AG04449 (cell line): ENCODE measurements at regions of chr19 and their contacts with region 1.

Region 1: GRCh38 chr19:45886427-45887199 is 672 bp upstream of the IRF2BP1 start:
- DNase-seq: peak; percentile 65
- H3K4me3 ChIP-seq: peak overlapping the region; percentile 78
- CTCF ChIP-seq: no peak

Region 2: GRCh38 chr19:45632468-45633196 is 254.0 kb before region 1 on chr19:
- CTCF ChIA-PET with region 1: no interaction called
- POLR2A ChIA-PET with region 1: no interaction called
- DNase-seq: peak; percentile 59
- H3K4me3 ChIP-seq: no peak overlapping the region
- CTCF ChIP-seq: no peak

Region 3: DNA sequence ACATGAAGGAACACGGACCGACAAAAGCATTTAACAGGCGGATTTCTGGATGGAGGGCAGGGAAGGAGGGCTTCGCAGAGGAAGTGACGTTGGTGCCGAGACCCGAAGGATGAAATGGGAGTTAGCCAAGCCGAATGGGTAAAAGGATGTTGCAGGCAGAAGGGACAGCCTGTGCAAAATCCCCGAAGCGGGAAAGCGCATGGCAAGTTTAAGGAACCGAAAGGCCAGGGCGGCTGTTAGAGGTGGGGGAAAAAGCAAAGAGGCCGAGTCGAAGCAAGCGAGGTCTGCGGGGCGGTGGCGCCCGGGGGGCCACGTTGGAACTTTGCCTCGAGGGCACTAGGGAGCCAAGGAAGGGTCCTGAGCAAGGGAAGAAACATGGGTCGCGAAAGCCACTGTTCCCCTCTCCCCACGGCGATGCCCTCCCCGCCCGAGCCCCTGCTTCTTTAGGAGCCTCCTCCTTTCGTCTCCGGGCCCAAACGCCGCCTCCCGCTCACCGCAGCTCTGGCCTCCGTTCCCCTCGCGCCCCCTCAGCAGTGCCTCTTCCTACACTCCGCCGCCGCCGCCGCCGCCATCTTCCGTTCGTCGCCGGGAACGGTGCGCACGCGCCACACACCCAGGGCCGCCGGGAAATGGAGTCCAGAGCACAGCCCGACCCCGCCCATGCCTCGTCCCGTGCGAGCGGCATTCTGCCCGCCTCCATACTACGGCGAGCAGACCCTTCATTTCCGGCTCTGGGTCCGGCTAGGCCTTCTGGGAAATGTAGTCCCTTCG is 23.9 kb before region 1 on chr19 and contains the start of gene SYMPK:
- CTCF ChIA-PET with region 1: interaction called, 67 read pairs
- POLR2A ChIA-PET with region 1: interaction called, 8 read pairs
- DNase-seq: peak; percentile 76
- H3K4me3 ChIP-seq: peak within 1 kb of the TSS; percentile 99
- CTCF ChIP-seq: no peak

Region 4: DNA sequence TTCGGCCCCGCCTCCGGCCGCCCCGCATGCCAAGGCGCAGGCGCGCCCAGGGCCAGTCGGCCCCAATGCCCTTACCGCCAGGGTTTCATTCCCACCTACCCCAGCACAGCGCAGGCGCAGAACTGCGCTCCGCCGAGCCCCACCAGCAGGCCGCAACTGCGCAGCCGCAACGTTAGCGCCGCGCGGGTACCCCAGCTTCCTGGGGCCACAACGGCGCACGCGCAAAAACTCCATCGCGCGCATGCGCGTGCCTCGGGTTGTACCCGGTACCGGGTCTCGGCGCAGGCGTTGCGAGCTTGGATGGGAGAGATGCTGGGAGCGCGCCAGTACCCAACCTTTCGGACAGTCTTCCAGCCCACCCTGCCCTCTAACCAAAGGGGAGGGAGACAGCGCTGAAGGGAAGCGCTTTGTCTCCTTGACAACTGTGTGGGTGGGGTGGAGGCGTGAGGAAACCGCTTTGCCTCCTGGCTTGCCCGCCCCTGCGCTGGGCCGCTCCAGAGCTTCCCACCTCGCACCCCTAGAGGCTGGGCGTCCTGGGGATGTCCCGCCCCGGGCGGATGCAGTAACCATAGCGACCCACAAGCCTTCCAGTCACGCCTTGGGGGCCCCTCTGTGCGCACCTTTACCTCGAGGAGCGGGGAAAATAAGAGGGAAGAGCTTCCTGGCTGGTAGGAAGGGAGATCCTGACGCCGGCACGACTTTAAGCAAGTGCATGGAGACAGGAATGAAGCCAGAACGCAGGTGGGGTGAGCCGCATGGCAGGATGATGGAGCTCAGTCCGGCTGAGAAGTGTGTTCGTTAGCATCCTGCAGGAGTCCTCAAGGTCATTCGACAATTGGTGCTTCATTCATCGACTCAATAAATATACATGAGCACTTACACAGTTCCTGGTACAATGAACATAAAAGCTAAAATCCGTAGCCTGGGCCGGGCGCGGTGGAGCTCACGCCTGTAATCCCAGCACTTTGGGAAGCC is 16.3 kb after region 1 on chr19:
- CTCF ChIA-PET with region 1: interaction called, 17 read pairs
- POLR2A ChIA-PET with region 1: interaction called, 8 read pairs
- DNase-seq: peak; percentile 42
- H3K4me3 ChIP-seq: peak overlapping the region; percentile 83
- CTCF ChIP-seq: no peak